Left cardiac atrium (tissue), 4 donors: ENCODE measurements at regions of chr6 and their contacts with region 1.

Region 1: GRCh38 chr6:123415844-123416468 is 220.8 kb downstream of the TRDN start:
- DNase-seq: peak; percentile 44
- ATAC-seq: peak; percentile 46 to 76

Region 2: GRCh38 chr6:123509112-123509511 is 93.2 kb after region 1 on chr6:
- intact Hi-C with region 1: no loop called
- DNase-seq: no peak
- ATAC-seq: no peak

Region 3: GRCh38 chr6:123715006-123715875 is 299.3 kb after region 1 on chr6:
- intact Hi-C with region 1: loop called (anchors 2 to 5 kb)
- DNase-seq: no peak
- ATAC-seq: peak; percentile 44 to 55